GM13977 (cell line): ENCODE measurements at regions of chr9 and their contacts with region 1.

Region 1: DNA sequence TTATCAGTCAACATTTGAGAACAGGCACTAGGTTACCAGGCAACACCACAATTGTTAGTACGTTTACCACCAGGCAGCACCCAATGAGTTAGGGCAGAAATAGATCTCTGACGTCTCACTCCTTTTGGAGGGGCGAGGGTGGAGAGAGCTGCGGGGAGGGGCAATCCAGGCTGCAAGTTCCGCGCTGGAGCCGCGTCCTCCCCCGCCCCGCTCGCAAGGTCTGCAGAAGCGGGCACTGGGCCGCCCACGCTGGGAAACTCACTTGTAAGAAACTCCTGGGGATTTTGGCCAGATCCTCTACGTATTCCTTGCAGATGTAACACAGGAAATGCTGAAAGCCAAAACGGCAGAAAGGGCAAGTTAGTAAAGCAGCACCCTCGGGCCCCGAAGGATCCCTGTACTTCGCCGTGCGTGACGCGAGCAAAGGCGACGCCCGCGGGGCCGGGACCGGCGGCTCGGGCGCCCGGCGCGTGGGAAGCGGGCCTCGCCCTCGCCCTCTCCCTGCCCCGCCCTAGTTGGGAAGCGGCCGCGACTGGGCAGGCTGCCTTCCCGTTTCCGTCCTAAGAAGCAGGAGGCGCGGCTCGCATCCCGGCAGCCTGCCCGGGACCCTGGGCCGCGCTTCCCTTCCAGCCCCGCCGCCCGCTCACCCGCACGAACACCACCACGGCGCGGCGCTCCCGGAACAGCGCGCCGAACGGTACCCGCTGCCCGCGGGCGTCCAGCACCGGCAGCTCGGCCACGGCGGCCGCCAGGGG is 497 bp downstream of the PRXL2C start:
- DNase-seq: peak; percentile 80
- CTCF ChIP-seq: peak; percentile 17

Region 2: DNA sequence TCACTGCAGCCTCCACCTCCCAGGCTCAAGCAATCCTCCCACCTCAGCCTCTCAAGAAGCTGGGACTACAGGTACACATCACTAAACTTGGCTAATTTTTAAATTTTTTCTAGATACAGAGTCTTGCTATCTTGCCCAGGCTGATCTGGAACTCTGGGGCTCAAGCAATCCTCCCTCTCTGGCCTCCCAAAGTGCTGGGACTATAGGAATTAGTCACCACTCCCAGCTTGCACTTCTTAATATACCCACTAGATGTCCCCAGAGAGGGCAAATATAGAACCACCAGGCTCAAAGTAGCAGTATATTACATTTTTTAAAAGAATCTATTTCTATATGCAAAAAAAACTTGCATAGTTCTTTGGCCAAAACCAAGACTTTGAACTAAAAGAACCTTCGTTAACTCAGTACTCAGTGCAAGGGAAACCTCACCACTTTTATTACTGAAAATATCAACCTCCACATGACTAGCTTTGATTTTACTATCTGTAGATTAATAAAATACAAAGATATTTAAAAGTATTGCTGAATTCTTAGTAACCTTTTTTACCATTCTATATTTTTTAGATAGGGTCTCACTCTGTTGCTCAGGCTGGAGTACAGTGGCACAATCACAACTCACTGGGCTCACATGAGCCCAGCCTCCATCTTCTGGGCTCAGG is 326.8 kb before region 1 on chr9:
- in situ Hi-C with region 1: loop called (anchors 5 kb)
- DNase-seq: peak; percentile 62
- CTCF ChIP-seq: peak; percentile 66

Region 3: DNA sequence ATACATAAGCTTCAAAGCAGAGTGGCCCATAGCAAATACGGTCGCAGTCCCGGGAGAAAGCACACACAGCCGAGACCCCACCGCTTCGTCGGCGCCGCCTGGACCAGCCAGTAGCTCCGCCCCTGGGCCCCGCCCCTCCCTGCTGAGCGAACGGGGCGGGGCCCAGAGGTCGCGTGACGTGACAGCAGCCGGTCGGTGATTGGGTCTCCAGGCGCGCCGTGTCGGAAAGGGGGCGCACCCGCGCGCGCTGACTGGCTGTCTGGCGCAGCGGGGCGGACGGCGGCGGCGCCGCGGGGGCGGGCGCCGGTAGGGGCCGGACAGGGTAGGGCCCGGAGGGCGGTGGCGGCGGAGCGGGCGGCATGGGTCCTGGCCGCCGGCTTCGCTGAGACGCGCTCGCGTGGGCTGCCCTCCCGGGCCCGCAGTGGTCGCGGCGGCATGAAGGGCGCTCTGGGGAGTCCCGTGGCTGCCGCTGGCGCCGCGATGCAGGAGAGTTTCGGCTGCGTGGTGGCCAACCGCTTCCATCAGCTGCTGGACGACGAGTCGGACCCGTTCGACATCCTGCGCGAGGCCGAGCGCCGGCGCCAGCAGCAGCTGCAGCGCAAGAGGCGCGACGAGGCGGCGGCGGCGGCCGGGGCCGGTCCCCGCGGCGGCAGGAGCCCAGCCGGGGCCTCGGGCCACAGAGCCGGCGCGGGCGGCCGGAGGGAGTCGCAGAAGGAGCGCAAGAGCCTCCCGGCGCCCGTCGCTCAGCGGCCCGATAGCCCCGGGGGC is 204.6 kb before region 1 on chr9 and contains the start of gene HABP4:
- in situ Hi-C with region 1: loop called (anchors 10 kb)
- DNase-seq: peak; percentile 99
- CTCF ChIP-seq: no peak